ENCODE measurements at regions of chr2 and their contacts with region 1.

Region 1: DNA sequence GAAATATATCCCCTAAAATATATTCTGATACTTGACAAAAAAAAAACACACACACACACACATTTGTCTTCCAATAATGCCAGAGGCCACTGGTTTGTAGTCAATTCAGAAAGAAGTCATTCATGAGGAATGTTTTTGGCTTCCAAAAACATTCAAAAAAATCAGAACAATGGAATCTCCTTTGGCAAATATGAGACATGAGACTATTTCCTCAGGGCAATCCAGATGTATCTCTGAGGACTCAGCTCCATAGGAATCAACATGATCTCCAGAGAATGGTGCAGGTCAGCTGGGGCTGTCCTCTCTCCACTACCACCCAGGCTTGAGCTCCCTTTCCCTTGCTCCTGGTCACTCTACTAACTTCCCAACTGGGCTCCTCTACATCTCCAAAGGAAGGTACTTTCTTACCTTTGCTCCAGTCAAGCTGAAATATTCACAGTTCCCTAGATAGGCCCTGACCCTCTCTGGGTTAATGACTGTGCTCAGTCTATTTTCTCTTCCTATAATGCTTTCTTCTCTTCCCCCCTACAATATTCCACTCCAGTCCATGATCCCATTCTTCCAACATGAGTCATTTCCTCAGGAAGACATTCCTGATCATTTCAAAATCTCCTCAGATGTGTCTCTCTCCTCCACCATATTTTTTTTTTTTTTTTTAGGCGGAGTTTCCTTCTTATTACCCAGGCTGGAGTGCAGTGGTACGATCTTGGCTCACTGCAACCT is 145.3 kb downstream of the C1D start:
- DNase-seq: no peak
- ATAC-seq: peak; percentile 23
- H3K4me3 ChIP-seq: no peak overlapping the region
- H3K27ac ChIP-seq: peak overlapping the region; percentile 36 to 94
- H3K4me1 ChIP-seq: peaks cover 0 to 1% of the 10 kb centered on the region in 2 donors
- H3K27me3 ChIP-seq: no peaks in the 10 kb centered on the region

Region 2: DNA sequence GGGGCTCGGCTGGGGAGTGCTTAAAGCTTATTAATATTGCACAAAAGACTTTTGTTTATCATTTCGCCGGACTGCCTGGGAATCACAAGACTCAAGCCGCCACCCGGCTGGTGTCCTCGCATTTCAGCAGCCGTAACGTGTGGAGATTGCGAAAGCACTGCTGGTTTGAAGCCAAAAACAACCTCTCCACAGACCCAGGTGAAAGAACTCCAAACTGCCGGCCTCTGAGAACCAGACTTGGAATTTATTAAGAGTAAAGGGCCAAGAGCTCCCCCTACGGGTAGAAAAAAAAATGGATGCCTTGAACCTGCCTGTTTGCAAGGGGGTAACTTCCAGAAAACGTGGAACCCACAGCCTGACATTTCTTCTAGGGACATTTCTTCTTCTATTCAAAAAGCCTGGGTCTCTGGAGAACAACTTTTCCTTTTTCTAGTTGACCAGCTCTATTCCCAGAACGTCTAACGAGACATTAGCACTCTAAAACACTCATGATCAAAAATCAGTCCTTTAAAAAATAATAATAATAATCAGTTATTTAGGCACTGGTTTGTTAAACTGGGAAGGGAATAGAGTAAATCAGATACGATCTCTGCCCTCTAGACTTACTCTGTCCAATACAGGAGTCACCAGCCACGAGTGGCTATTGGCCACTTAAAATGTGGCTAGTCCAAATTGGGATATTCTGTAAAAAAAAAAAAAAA is 71.0 kb before region 1 on chr2:
- intact Hi-C with region 1: loop called in 1 of 2 experiments (anchors 5 kb)
- DNase-seq: peak; percentile 82 to 83
- ATAC-seq: peak; percentile 73
- H3K4me3 ChIP-seq: no peak overlapping the region
- H3K27ac ChIP-seq: no peak overlapping the region
- H3K4me1 ChIP-seq: peaks cover 0 to 1% of the 10 kb centered on the region in 2 donors
- H3K27me3 ChIP-seq: no peaks in the 10 kb centered on the region

Region 3: DNA sequence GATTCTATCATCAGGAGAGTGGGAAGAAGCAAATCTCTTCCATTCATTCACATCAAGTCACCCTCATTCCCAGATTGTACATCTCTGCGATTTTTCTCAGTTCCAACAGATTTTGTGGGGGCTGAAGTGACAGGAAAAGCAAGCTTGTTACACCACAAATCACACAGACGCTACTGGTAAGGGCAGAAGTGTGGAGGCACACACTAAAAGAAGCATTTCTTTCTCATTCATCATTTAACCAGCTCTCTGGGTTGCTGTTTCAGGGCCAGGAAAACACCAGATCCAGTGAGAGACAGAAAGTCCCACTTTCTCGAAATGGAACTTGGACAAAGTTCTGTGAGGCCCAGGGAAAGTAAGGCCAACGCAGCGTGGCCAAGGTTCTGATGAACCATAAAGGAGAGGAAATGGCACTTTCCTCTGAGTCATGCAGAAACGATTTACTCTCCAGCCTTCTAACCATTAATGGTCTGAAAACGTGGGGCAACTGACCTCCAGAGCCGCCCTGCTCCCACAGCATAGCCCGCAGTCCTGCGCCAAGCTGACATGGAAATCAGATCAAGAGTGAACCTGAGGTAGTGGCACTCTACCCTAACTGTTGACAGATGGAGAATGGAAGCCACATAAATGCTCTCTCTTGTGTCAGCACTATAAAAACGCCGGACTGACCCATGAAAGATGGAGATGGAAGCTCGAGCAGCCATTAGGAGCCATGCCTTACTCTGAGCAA is 45.6 kb before region 1 on chr2:
- intact Hi-C with region 1: loop called (anchors 2 to 5 kb)
- DNase-seq: peak; percentile 83 to 90
- ATAC-seq: peak; percentile 91
- H3K4me3 ChIP-seq: no peak overlapping the region
- H3K27ac ChIP-seq: peak overlapping the region; percentile 95 to 99
- H3K4me1 ChIP-seq: peaks cover 5 to 25% of the 10 kb centered on the region in 2 donors
- H3K27me3 ChIP-seq: no peaks in the 10 kb centered on the region

Region 4: DNA sequence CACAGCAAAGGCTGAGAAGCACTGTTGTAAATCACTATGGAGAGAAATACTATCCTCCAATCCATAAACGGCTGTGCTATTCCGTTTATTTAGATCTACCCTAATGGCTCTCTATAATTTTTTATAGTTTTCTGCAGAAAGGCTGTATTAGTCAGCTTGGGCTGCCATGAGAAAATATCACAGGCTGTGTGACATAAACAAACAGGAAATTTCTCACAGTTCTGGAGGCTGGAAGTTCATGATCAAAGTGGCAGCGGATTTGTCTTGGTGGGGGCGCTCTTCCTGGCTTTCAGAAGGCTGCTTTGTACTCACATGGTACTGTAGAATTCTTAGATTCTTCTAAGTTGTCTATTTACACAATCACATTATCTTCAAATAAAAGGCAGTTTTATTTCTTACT is 101.2 kb after region 1 on chr2:
- intact Hi-C with region 1: no loop called
- DNase-seq: no peak
- ATAC-seq: no peak
- H3K4me3 ChIP-seq: no peak overlapping the region
- H3K27ac ChIP-seq: no peak overlapping the region
- H3K4me1 ChIP-seq: no peaks in the 10 kb centered on the region
- H3K27me3 ChIP-seq: no peaks in the 10 kb centered on the region

Region 5: GRCh38 chr2:68263632-68264031 is 346.1 kb after region 1 on chr2:
- intact Hi-C with region 1: no loop called
- DNase-seq: no peak
- ATAC-seq: no peak
- H3K4me3 ChIP-seq: no peak overlapping the region
- H3K27ac ChIP-seq: no peak overlapping the region
- H3K4me1 ChIP-seq: no peaks in the 10 kb centered on the region
- H3K27me3 ChIP-seq: no peaks in the 10 kb centered on the region

Measured in aorta (tissue), 5 donors.